Pancreas (tissue), 10 donors: ENCODE measurements at regions of chr14 and their contacts with region 1.

Region 1: GRCh38 chr14:95561001-95561412 is 26.2 kb downstream of the GLRX5 start:
- DNase-seq: peak; percentile 83 to 96 (median 94)
- ATAC-seq: peak; percentile 87 to 98 (median 96)
- H3K4me3 ChIP-seq: no peak overlapping the region
- H3K27ac ChIP-seq: no peak overlapping the region
- H3K4me1 ChIP-seq: peaks cover 0 to 7% (median 0%) of the 10 kb centered on the region in 3 donors
- H3K27me3 ChIP-seq: no peaks in the 10 kb centered on the region
- CTCF ChIP-seq: peak; percentile 97 to 99 (median 98)

Region 2: DNA sequence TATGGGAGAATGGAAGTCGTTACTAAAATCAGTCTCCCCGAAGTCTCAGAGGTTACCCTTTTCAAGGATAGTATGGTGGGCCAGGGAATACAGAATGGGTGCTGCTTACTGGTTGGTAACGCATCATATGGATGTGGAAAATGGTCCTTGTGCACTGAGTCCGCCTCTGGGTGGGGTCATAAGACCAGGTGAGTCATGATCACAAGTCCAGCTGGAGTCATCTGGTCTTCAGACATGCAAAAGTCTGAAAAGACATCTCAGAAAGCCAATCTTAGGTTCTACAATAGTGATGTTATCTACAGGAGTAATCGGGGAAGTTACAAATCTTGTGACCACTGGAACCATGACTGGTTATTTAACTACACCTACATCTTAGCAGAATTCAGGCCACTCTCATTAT is 53.3 kb after region 1 on chr14:
- intact Hi-C with region 1: no loop called
- DNase-seq: no peak
- ATAC-seq: peak in 1 of 4 donors; percentile 60
- H3K4me3 ChIP-seq: no peak overlapping the region
- H3K27ac ChIP-seq: no peak overlapping the region
- H3K4me1 ChIP-seq: no peaks in the 10 kb centered on the region
- H3K27me3 ChIP-seq: no peaks in the 10 kb centered on the region
- CTCF ChIP-seq: no peak

Region 3: DNA sequence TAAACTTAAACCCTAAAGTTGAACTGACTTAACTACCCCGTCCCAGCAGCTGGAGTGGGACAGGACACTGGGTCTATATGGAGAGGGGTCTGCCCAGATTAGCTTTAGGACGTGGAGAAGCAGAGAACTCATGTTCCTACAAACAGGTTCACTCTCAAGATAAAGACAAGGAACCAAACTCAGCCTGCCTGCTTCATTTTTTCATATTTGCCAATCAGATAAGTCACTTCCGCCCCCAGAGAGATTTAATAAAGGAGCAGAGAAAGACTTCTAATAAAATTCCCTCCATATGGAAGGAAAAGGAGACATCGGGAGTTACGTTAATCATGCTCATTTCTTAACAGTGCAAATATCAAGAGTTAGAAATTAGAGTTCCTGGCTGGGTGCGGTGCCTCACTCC is 195.1 kb after region 1 on chr14:
- intact Hi-C with region 1: no loop called
- DNase-seq: no peak
- ATAC-seq: peak; percentile 16 to 61 (median 52)
- H3K4me3 ChIP-seq: no peak overlapping the region
- H3K27ac ChIP-seq: peak overlapping the region; percentile 4 to 51 (median 28)
- H3K4me1 ChIP-seq: peaks cover 0 to 11% (median 9%) of the 10 kb centered on the region in 3 donors
- H3K27me3 ChIP-seq: no peaks in the 10 kb centered on the region
- CTCF ChIP-seq: no peak

Region 4: DNA sequence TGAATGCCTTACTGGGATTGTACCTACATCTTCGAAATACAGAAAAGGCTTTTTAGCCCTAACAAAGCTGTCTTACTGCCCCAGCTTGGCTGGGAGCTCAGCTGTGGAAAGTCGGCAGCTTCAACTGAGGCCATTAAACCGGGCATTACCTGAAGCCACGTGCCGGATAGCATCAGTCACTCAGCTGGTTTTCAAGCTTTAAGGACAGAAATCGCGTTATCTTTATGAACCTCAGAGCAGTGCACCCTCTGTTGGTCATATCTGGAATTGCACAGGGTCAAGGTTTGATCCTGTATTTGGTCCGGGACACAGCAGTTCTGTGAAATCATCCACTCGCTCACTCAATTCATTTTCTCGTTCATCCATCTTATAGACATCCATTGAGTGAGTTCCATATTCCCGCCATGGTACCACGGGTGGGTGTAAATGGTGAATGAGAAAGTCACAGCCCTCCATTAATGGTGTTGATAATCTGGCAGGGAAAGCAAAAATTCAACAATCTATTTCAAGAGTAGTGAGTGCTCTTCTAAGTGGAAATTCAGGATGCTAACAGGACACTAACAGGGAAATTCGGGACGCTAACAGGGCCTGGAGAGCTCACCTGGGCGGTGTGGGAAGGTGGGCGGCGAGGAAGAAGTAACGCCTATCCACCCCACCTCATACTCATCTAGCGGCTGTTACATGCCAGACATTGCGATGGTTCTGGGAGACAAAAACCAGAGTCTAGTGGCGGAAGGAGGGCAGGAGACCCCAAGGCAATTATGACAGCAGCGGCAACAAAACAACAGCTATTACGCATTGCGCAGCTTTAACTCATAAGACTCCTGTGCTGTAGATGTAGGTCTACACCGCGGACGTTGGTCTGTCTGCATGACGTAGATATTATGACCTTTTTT is 213.5 kb after region 1 on chr14:
- intact Hi-C with region 1: loop called in 1 of 3 experiments (anchors 10 kb)
- DNase-seq: peak in 5 of 6 donors; percentile 26 to 72 (median 46)
- ATAC-seq: peak; percentile 64 to 90 (median 82)
- H3K4me3 ChIP-seq: no peak overlapping the region
- H3K27ac ChIP-seq: no peak overlapping the region
- H3K4me1 ChIP-seq: no peaks in the 10 kb centered on the region
- H3K27me3 ChIP-seq: no peaks in the 10 kb centered on the region
- CTCF ChIP-seq: peak; percentile 76 to 92 (median 82)

Region 5: GRCh38 chr14:95979339-95980042 is 418.5 kb after region 1 on chr14:
- intact Hi-C with region 1: loop called in 1 of 3 experiments (anchors 10 kb)
- DNase-seq: no peak
- ATAC-seq: no peak
- H3K4me3 ChIP-seq: no peak overlapping the region
- H3K27ac ChIP-seq: no peak overlapping the region
- H3K4me1 ChIP-seq: no peaks in the 10 kb centered on the region
- H3K27me3 ChIP-seq: peaks cover 0 to 4% (median 0%) of the 10 kb centered on the region in 4 donors
- CTCF ChIP-seq: no peak

Region 6: GRCh38 chr14:95993768-95994592 is 433.0 kb after region 1 on chr14:
- intact Hi-C with region 1: loop called in 2 of 3 experiments (anchors 5 to 10 kb)
- DNase-seq: peak in 4 of 6 donors; percentile 9 to 31 (median 20)
- ATAC-seq: peak in 3 of 4 donors; percentile 77
- H3K4me3 ChIP-seq: no peak overlapping the region
- H3K27ac ChIP-seq: no peak overlapping the region
- H3K4me1 ChIP-seq: no peaks in the 10 kb centered on the region
- H3K27me3 ChIP-seq: peaks cover 0 to 6% (median 0%) of the 10 kb centered on the region in 4 donors
- CTCF ChIP-seq: peak; percentile 69 to 84 (median 74)